ENCODE measurements at regions of chr4 and their contacts with region 1.

Region 1: DNA sequence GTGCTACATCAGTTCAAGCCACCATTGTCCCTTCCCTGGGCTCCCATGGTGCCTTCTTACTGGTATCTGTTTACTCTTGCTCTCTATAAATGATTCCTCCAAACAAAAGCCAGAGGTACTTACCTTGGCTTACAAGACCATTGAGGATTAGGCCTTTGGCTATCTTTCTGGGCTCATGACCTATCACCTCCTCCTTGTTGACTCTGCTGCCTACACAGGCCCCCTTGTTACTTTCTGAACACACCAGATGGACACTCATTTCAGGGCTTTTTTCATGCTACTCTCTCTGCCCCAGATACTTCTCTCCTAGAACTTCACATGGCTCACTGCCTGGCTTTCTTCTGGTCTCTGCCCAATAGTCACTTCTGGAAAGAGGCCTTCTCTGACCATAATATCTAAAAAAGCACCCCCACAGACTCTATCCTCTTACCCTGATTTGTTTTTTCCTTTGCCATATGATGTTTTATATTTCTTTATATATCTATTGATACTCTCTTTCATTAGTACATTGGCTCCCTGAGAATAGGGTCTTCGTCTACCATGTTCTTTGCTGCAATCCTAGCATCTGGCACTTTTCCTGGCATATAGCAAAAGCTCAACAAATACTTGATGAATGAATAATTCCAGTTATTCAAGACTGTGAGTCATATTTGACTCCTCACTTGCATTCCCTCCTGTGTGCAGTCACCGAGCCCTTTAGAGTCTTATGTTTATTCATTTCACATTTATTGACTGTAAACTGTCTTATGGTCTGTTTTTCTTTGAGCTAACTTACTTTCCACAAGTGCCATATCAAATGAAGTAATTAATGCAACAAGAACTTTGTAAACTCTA is 27.1 kb upstream of the TAPT1 start:
- DNase-seq: peak; percentile 64
- H3K4me3 ChIP-seq: no peak overlapping the region
- H3K27ac ChIP-seq: no peak overlapping the region
- H3K4me1 ChIP-seq: peaks cover 14% of the 10 kb centered on the region
- H3K27me3 ChIP-seq: no peaks in the 10 kb centered on the region
- CTCF ChIP-seq: no peak

Region 2: DNA sequence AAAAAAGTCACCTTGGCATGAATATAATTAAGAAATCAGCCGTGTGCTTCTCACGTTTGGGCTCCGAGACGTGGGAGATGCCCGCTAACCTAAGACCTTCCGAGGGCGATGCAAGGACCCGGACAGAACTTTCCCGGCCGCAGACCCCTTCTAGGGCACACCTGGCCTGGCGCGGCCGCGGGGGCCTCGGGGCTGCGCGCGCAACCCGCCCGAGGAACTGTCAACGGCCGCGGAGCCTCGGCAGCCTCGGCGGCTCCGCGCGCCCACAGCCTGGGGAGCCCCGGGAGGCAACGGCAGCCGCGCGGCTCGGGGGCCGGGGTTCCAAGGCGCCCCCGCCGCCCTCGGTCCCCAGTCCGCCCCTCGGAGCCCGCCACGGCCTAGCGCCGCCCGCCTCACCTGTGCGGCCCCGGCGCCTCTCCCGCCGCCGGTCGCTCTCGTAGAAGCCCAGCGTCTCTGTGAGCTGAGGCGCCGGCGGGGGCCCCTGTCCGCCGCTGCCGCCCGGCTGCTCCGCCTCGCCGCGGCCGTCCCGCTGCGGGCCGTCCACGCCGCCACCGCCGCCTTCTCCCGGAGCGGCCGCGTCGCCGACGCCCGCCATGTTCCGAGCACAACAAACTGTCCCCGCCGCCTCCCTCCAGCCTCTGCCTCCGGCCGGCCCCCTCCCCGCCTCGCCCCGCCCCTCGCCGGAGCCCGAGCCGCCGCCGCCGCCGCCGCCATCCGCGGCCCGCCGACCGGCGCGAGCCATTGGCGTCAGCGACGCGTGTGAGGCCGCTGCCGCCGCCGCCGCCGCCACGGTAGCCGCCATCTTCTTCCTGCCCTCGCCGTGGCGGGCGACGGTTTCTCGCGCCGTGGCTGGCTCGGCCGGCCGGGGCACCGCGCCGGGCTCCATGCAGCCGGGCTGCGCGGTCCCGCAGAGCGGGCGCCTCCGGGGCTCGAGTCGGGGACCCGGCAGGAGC is 27.2 kb before region 1 on chr4 and contains the start of gene TAPT1:
- CTCF ChIA-PET with region 1: no interaction called
- dilution Hi-C with region 1: no loop called
- in situ Hi-C with region 1: no loop called
- intact Hi-C with region 1: loop called (anchors 2 kb)
- DNase-seq: peak; percentile 57
- H3K4me3 ChIP-seq: peak within 1 kb of the TSS; percentile 58 to 93 (median 92)
- H3K27ac ChIP-seq: peak within 1 kb of the TSS; percentile 45
- H3K4me1 ChIP-seq: no peaks in the 10 kb centered on the region
- H3K27me3 ChIP-seq: no peaks in the 10 kb centered on the region
- CTCF ChIP-seq: no peak
- total RNA-seq, gene TAPT1: 16.2 to 21.1 TPM

Region 3: GRCh38 chr4:16365036-16365569 is 111.8 kb after region 1 on chr4:
- CTCF ChIA-PET with region 1: no interaction called
- dilution Hi-C with region 1: no loop called
- in situ Hi-C with region 1: no loop called
- intact Hi-C with region 1: no loop called
- DNase-seq: no peak
- H3K4me3 ChIP-seq: no peak overlapping the region
- H3K27ac ChIP-seq: no peak overlapping the region
- H3K4me1 ChIP-seq: no peaks in the 10 kb centered on the region
- H3K27me3 ChIP-seq: no peaks in the 10 kb centered on the region
- CTCF ChIP-seq: no peak

Region 4: GRCh38 chr4:16450724-16451123 is 197.4 kb after region 1 on chr4:
- CTCF ChIA-PET with region 1: interaction called, 10 read pairs
- dilution Hi-C with region 1: no loop called
- in situ Hi-C with region 1: no loop called
- intact Hi-C with region 1: no loop called
- DNase-seq: no peak
- H3K4me3 ChIP-seq: no peak overlapping the region
- H3K27ac ChIP-seq: no peak overlapping the region
- H3K4me1 ChIP-seq: no peaks in the 10 kb centered on the region
- H3K27me3 ChIP-seq: no peaks in the 10 kb centered on the region
- CTCF ChIP-seq: no peak

Measured in mammary epithelial cell (primary cell).